WTC11 (cell line): ENCODE measurements at regions of chr17 and their contacts with region 1.

Region 1: GRCh38 chr17:10618202-10618635 is 38.9 kb downstream of the MYH3 start:
- DNase-seq: peak; percentile 80
- ATAC-seq: peak; percentile 91
- H3K4me3 Mint-ChIP-seq: no peak overlapping the region
- H3K27ac Mint-ChIP-seq: no peak overlapping the region
- H3K4me1 Mint-ChIP-seq: peaks cover 14% of the 10 kb centered on the region
- H3K27me3 Mint-ChIP-seq: no peaks in the 10 kb centered on the region
- CTCF ChIP-seq: peak; percentile 78

Region 2: GRCh38 chr17:10265100-10265810 is 353.0 kb before region 1 on chr17:
- CTCF ChIA-PET with region 1: no interaction called
- POLR2A ChIA-PET with region 1: interaction called, 11 read pairs
- DNase-seq: no peak
- ATAC-seq: no peak
- H3K4me3 Mint-ChIP-seq: no peak overlapping the region
- H3K27ac Mint-ChIP-seq: no peak overlapping the region
- H3K4me1 Mint-ChIP-seq: peaks cover 8% of the 10 kb centered on the region
- H3K27me3 Mint-ChIP-seq: no peaks in the 10 kb centered on the region; the same call in 1 of the 2 replicates
- CTCF ChIP-seq: no peak

Region 3: DNA sequence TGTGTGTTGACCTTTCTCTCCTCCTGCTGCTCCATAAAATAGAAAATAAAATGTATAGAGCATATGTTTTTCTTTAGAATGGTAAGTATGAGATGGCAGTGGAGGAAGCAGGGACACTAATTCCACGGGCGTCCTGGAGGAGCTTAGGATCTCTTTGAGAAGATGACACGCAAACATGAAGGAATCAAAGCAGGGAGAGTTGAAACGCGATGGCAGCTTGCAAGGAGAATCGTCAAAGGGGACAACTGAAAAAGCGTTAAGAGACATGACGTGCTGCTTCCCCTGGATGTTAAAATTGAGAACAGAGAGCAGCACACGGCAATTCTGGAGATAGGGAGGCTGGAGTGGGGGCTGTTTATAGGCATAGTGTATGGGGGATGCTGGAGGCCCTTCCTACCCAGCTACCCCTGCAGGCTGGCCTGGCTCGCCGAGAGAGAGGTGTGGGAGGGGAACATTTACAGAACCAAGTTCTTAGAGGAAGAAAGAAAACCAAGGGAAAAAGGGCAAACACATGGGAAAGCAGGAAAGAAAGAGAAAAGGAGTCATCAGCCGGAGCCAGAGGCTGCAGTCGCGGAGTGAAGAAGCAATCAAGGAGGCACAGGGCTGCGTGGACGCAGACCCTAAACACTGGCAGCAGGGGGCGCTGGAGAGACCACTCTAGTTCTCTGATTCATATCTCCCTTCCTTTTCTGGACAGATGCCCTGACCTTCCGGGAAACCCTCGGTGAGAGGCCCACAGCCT is 301.2 kb before region 1 on chr17:
- CTCF ChIA-PET with region 1: interaction called, 23 read pairs
- POLR2A ChIA-PET with region 1: no interaction called
- DNase-seq: peak; percentile 77
- ATAC-seq: peak; percentile 89
- H3K4me3 Mint-ChIP-seq: no peak overlapping the region
- H3K27ac Mint-ChIP-seq: no peak overlapping the region
- H3K4me1 Mint-ChIP-seq: peaks cover 14% of the 10 kb centered on the region
- H3K27me3 Mint-ChIP-seq: peaks cover 8% of the 10 kb centered on the region
- CTCF ChIP-seq: peak; percentile 80

Region 4: DNA sequence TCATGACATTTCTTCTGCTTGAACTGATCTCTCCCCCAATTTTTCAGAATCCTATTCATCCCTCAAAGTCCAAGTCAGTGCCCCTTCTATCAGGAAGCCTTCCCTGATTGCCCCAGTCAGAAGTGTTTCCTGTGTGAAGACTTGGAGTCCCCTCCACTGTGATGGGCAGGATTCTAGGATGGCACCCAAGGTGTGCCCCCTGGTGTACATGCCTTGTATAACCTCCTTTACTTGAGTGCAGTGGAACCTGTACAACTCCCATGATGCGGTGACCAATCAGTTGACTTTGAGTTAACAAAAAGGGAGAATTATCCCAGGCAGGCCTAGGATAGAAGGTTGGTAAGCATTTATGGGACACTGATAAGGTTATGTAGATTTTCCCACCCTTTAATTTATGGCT is 268.8 kb before region 1 on chr17:
- CTCF ChIA-PET with region 1: interaction called, 11 read pairs
- POLR2A ChIA-PET with region 1: no interaction called
- DNase-seq: peak; percentile 50
- ATAC-seq: peak; percentile 85
- H3K4me3 Mint-ChIP-seq: no peak overlapping the region
- H3K27ac Mint-ChIP-seq: no peak overlapping the region
- H3K4me1 Mint-ChIP-seq: no peaks in the 10 kb centered on the region
- H3K27me3 Mint-ChIP-seq: no peaks in the 10 kb centered on the region
- CTCF ChIP-seq: peak; percentile 53

Region 5: GRCh38 chr17:10394201-10394887 is 223.9 kb before region 1 on chr17:
- CTCF ChIA-PET with region 1: interaction called, 13 read pairs
- POLR2A ChIA-PET with region 1: no interaction called
- DNase-seq: no peak
- ATAC-seq: no peak
- H3K4me3 Mint-ChIP-seq: no peak overlapping the region
- H3K27ac Mint-ChIP-seq: no peak overlapping the region
- H3K4me1 Mint-ChIP-seq: no peaks in the 10 kb centered on the region
- H3K27me3 Mint-ChIP-seq: no peaks in the 10 kb centered on the region; the same call in 1 of the 2 replicates
- CTCF ChIP-seq: no peak

Region 6: GRCh38 chr17:10631048-10631700 is 13.0 kb after region 1 on chr17:
- CTCF ChIA-PET with region 1: interaction called, 198 read pairs
- POLR2A ChIA-PET with region 1: no interaction called
- DNase-seq: peak; percentile 69
- ATAC-seq: peak; percentile 58
- H3K4me3 Mint-ChIP-seq: no peak overlapping the region
- H3K27ac Mint-ChIP-seq: no peak overlapping the region
- H3K4me1 Mint-ChIP-seq: 0 out of 2 replicates have a peak, but pooled peaks cover 3% of the 10 kb centered on the region
- H3K27me3 Mint-ChIP-seq: no peaks in the 10 kb centered on the region
- CTCF ChIP-seq: peak; percentile 74